OCI-LY7 (cell line): ENCODE measurements at regions of chr17 and their contacts with region 1.

Region 1: DNA sequence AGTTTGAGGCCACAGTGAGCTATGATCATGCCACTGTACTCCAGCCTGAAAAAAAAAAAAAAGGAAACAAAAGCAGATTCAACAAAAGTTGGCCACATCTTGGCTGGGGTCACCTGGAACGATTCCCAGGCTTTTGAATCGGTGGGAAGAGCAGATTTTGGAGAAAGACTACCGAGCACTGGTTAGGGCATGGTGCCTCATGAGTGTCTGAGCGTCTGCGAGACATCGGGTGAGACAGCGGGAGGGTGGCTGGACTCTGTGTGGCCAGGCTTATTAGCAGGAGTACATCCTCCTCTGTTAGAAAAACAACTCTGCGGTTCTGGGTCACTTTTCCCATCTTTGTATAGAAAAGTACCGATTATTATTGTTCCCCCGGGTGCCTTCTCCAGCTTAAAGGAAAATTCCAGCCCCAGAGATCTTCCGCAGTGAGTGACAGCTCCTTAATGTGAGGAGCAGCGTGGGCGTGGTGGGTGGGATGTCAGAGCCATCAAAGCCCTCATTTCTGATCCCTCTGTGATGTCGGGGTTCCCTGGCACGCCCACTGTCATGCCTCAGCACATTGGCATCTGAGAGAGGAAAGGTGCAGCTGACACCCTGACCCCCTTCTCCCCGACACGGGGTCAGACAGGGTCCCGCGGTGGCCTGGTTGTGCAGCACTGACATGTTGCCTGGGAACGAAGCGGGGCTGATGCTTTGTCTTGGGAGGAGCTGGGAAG is 6.9 kb downstream of the RGS9 start:
- DNase-seq: no peak
- H3K4me3 ChIP-seq: no peak overlapping the region
- H3K27ac ChIP-seq: no peak overlapping the region
- H3K4me1 ChIP-seq: peaks cover 27% of the 10 kb centered on the region
- CTCF ChIP-seq: no peak

Region 2: GRCh38 chr17:65163990-65164495 is 20.0 kb after region 1 on chr17:
- CTCF ChIA-PET with region 1: interaction called, 10 read pairs
- POLR2A ChIA-PET with region 1: no interaction called
- intact Hi-C with region 1: no loop called
- DNase-seq: peak; percentile 81
- H3K4me3 ChIP-seq: peak overlapping the region; percentile 8
- H3K27ac ChIP-seq: peak overlapping the region; percentile 39
- H3K4me1 ChIP-seq: peaks cover 22% of the 10 kb centered on the region
- CTCF ChIP-seq: no peak

Region 3: DNA sequence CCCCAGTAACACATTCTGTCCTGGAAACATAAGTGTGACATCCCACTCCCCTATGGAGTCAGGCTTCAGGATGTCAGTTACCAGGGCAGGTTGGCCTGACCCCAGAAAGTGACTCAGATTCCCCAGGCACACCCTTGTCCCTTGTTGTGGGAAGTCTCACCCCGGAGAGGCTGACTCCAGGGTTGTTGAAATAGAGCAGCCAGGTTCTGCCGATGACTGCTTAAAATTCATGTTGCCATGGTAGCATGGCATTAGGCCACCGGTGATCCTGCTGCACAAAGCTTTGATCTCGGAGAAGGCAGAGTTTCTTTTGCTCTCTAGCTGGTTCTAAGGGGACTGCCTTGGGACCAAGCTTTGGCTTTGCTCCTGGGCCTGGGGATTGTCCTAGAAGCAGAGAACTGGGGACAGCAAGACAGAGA is 99.8 kb after region 1 on chr17:
- CTCF ChIA-PET with region 1: no interaction called
- POLR2A ChIA-PET with region 1: no interaction called
- intact Hi-C with region 1: no loop called
- DNase-seq: no peak
- H3K4me3 ChIP-seq: no peak overlapping the region
- H3K27ac ChIP-seq: no peak overlapping the region
- H3K4me1 ChIP-seq: no peaks in the 10 kb centered on the region
- CTCF ChIP-seq: no peak

Region 4: DNA sequence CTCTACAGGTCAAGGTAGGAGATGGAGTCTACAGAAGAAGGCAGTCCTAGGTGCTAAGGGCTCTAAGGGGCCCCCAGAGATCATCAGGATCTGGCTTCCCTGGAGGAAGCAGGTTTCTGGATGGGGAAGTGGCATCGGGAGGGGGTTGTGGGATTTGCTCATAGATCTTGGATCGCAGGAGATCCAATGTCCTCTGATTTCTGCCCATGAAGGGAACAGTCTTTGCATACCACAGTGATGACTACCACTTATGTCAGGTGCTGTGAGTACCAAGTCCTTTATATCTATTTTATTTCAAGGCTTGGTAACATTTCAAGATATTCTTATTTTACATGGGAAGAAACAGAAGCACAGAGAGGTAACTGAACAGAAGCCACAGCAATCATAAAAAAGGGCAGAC is 157.1 kb after region 1 on chr17:
- CTCF ChIA-PET with region 1: no interaction called
- POLR2A ChIA-PET with region 1: no interaction called
- intact Hi-C with region 1: no loop called
- DNase-seq: no peak
- H3K4me3 ChIP-seq: no peak overlapping the region
- H3K27ac ChIP-seq: no peak overlapping the region
- H3K4me1 ChIP-seq: no peaks in the 10 kb centered on the region
- CTCF ChIP-seq: no peak

Region 5: GRCh38 chr17:65774787-65775186 is 630.7 kb after region 1 on chr17:
- CTCF ChIA-PET with region 1: no interaction called
- POLR2A ChIA-PET with region 1: no interaction called
- intact Hi-C with region 1: no loop called
- DNase-seq: no peak
- H3K4me3 ChIP-seq: no peak overlapping the region
- H3K27ac ChIP-seq: no peak overlapping the region
- H3K4me1 ChIP-seq: no peaks in the 10 kb centered on the region
- CTCF ChIP-seq: no peak